Activated naive CD4-positive, alpha-beta T cell treated with anti-CD3 and anti-CD28 coated beads for 36 hours (primary cell): ENCODE measurements at regions of chr2 and their contacts with region 1.

Region 1: GRCh38 chr2:15577071-15577735 is 14.5 kb upstream of the DDX1 start:
- DNase-seq: peak; percentile 97
- H3K4me3 Mint-ChIP-seq: no peak overlapping the region
- H3K27ac Mint-ChIP-seq: no peak overlapping the region
- H3K4me1 Mint-ChIP-seq: no peaks in the 10 kb centered on the region
- H3K27me3 Mint-ChIP-seq: no peaks in the 10 kb centered on the region

Region 2: GRCh38 chr2:15031745-15032240 is 545.4 kb before region 1 on chr2:
- CTCF ChIA-PET with region 1: interaction called, 5 read pairs
- intact Hi-C with region 1: loop called (anchors 10 kb)
- DNase-seq: no peak
- H3K4me3 Mint-ChIP-seq: no peak overlapping the region
- H3K27ac Mint-ChIP-seq: no peak overlapping the region
- H3K4me1 Mint-ChIP-seq: no peaks in the 10 kb centered on the region
- H3K27me3 Mint-ChIP-seq: peaks cover 11% of the 10 kb centered on the region

Region 3: DNA sequence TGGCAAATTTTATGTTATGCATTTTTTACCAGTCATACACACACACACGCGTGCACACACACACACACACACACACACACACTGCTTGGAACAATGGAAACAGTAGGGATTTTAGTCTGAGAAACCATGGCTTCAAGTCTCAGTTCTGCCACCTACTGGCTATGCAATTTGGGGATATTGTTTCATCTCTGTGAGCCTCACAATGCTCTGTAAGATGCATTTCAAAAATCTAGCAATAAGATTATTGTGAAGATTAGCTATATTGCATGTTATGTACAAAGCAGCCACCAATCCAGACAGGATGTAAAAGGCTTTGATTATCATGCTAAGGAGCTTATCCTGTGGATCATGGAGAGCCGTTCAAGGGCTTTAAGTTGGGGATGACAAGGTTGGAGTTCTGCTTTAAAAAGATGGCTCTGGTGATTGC is 417.4 kb before region 1 on chr2:
- CTCF ChIA-PET with region 1: interaction called, 3 read pairs
- intact Hi-C with region 1: loop called (anchors 2 kb)
- DNase-seq: peak; percentile 41
- H3K4me3 Mint-ChIP-seq: no peak overlapping the region
- H3K27ac Mint-ChIP-seq: no peak overlapping the region
- H3K4me1 Mint-ChIP-seq: peaks cover 9% of the 10 kb centered on the region
- H3K27me3 Mint-ChIP-seq: peaks cover 24% of the 10 kb centered on the region

Region 4: GRCh38 chr2:15432642-15433256 is 144.5 kb before region 1 on chr2:
- CTCF ChIA-PET with region 1: interaction called, 5 read pairs
- intact Hi-C with region 1: loop called (anchors 5 kb)
- DNase-seq: no peak
- H3K4me3 Mint-ChIP-seq: no peak overlapping the region
- H3K27ac Mint-ChIP-seq: no peak overlapping the region
- H3K4me1 Mint-ChIP-seq: peaks cover 5% of the 10 kb centered on the region
- H3K27me3 Mint-ChIP-seq: no peaks in the 10 kb centered on the region

Region 5: GRCh38 chr2:15560988-15561573 is 16.1 kb before region 1 on chr2 and contains the start of gene NBAS:
- CTCF ChIA-PET with region 1: interaction called, 21 read pairs
- intact Hi-C with region 1: loop called (anchors 1 kb)
- DNase-seq: peak; percentile 94
- H3K4me3 Mint-ChIP-seq: peak within 1 kb of the TSS; percentile 98
- H3K27ac Mint-ChIP-seq: peak within 1 kb of the TSS; percentile 92
- H3K4me1 Mint-ChIP-seq: peaks cover 32% of the 10 kb centered on the region
- H3K27me3 Mint-ChIP-seq: no peaks in the 10 kb centered on the region
- total RNA-seq, gene NBAS: 45.5 to 46.4 TPM